T-cell (primary cell): ENCODE measurements at regions of chr4 and their contacts with region 1.

Region 1: DNA sequence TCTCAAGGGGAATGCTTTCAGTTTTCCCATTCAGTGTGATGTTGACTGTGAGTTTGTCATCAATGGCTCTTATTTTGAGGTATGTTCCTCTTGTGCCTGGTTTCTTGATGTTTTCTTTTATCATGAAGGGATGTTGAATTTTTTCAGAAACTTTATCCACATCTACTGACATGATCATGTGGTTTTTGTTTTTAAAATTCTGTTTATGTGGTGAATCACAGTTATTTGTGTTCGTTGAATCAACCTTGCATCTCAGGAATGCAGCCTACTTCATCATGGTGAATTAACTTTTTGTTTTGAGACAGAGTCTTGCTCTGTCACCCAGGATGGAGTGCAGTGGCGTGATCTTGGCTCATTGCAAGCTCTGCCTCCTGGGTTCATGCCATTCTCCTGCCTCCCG is 263.1 kb upstream of the KLF3 start:
- DNase-seq: no peak
- ATAC-seq: no peak
- H3K4me3 ChIP-seq: no peak overlapping the region
- H3K4me3 Mint-ChIP-seq: no peak overlapping the region
- H3K27ac ChIP-seq: no peak overlapping the region
- H3K27ac Mint-ChIP-seq: no peak overlapping the region
- H3K4me1 ChIP-seq: no peaks in the 10 kb centered on the region
- H3K4me1 Mint-ChIP-seq: peaks cover 0 to 9% (median 0%) of the 10 kb centered on the region in 3 donors
- H3K27me3 ChIP-seq: no peaks in the 10 kb centered on the region
- H3K27me3 Mint-ChIP-seq: no peaks in the 10 kb centered on the region

Region 2: DNA sequence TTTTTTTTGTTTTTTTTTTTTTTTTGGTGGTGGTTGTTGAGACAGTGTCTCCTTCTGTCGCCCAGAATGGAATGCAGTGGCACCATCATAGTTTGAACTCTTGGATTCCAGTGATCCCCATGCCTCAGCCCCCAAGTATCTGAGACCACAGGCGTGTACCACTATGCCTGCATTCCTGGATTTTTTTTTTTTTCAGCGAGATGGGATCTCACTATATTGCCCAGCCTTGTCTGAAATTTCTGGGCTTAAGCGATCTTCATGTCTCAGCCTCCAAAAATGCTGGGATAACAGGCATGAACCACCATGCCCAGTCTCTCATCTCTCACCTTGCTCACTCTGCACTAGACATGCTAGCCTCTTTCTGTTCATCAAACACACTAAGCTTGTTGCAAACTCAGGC is 1401.0 kb after region 1 on chr4:
- CTCF ChIA-PET with region 1: interaction called in 1 of 2 experiments, 11 read pairs
- POLR2A ChIA-PET with region 1: no interaction called
- DNase-seq: no peak
- ATAC-seq: no peak
- H3K4me3 ChIP-seq: no peak overlapping the region
- H3K4me3 Mint-ChIP-seq: no peak overlapping the region
- H3K27ac ChIP-seq: no peak overlapping the region
- H3K27ac Mint-ChIP-seq: no peak overlapping the region
- H3K4me1 ChIP-seq: no peaks in the 10 kb centered on the region
- H3K4me1 Mint-ChIP-seq: no peaks in the 10 kb centered on the region
- H3K27me3 ChIP-seq: peaks cover 0 to 3% of the 10 kb centered on the region in 2 experiments
- H3K27me3 Mint-ChIP-seq: peaks cover 0 to 1% of the 10 kb centered on the region in 2 donors